ENCODE measurements at regions of chr7 and their contacts with region 1.

Region 1: DNA sequence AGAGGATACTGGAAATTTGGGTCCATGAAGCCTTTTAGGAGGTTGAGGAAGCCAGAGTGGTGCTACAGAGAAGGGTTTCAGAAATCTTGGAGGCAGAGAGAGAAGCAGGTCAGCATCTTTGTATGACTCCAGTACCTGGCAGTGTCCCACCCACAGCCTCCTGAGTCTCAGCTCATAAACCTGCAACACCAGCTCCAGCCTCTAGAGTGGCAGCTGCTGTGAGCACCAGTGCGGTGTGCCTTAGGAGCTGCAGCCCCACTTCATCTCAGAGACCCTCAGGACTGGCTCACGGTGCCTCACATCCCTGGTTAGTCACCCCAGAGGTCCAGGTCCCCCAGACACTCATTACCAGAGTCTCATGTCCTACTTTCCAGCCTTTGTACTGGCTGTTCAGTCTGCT is 84.8 kb upstream of the PRKAR2B start:
- H3K4me3 Mint-ChIP-seq: no peak overlapping the region
- H3K27ac Mint-ChIP-seq: peak overlapping the region; percentile 23
- H3K4me1 Mint-ChIP-seq: peaks cover 24% of the 10 kb centered on the region
- H3K27me3 Mint-ChIP-seq: no peaks in the 10 kb centered on the region

Region 2: DNA sequence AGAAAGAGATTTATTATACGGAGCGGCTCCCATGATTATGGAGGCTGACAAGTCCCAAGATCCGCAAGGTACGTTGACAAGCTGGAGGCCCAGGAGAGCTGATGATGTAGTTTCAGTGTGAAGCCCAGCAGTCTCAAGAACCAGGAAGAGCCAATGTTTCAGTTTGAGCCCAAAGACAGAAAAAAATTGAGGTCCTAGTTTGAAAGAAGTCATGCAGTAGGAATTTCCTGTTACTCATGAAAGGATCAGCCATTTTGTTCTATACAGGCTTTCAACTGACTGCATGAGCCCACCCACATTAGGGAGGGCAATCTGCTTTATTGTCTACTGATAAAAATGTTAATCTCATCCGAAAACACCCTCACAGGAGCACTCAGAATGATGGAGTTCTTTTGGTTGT is 350.3 kb before region 1 on chr7:
- intact Hi-C with region 1: no loop called
- H3K4me3 Mint-ChIP-seq: no peak overlapping the region
- H3K27ac Mint-ChIP-seq: no peak overlapping the region
- H3K4me1 Mint-ChIP-seq: no peaks in the 10 kb centered on the region
- H3K27me3 Mint-ChIP-seq: peaks cover 3% of the 10 kb centered on the region

Region 3: DNA sequence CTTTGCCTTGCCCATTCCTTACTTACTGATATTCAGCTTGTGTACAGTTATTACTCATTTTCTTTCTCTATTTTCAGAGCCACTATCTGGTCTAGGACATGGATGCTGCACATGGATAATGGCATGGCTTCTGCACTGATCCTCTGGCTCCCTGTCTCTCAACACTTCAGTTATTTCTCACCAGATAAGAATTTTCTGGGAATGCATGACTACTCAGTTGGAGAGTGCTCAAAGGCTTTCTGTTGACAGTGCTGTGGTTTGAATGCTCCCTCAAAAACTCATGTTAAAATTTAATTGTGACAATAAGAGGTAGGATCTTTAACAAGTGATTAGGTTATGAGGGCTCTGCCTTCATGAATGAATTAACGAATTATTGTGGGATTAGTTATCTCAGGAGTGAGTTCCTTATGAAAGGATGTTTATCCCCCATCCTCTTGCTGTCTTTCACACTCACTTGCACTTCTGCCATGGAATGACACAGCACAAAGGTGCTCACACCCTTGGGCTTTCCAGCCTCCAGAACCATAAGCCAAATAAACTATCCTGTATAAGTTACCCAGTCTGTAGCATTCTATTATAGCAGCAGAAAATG is 110.8 kb before region 1 on chr7:
- intact Hi-C with region 1: no loop called
- H3K4me3 Mint-ChIP-seq: no peak overlapping the region
- H3K27ac Mint-ChIP-seq: no peak overlapping the region
- H3K4me1 Mint-ChIP-seq: peaks cover 7% of the 10 kb centered on the region
- H3K27me3 Mint-ChIP-seq: peaks cover 4% of the 10 kb centered on the region

Region 4: DNA sequence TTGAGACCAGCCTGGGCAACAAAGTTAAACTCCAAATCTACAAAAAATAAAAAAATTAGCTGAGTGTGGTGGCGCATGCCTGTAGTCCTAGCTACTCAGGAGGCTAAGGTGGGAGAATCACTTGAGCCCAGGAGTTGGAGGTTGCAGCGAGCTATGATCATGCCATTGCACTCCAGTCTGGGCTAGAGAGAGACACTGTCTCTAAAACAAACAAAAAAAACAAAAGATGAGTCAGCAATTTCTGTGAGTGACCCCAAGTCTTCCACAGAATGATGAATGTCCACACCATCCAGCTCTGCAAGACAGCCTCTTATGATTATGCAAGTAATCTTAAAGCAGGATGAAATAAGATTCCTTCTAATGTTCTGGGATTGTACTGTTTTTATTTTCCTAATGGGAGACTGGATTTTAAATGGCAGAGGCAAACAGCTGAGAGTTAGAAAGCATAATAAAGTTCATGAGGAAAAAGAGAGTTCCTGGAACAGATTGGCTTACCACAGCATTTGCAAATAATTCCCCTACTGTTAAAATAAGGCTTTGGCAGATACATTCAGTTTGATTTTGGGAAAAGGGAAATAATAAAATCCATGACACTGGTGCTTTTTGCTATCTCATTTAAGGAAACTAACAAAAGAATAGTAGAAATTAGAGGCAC is 65.8 kb after region 1 on chr7:
- intact Hi-C with region 1: loop called (anchors 5 kb)
- H3K4me3 Mint-ChIP-seq: peak overlapping the region; percentile 7
- H3K27ac Mint-ChIP-seq: peak overlapping the region; percentile 81
- H3K4me1 Mint-ChIP-seq: peaks cover 41% of the 10 kb centered on the region
- H3K27me3 Mint-ChIP-seq: no peaks in the 10 kb centered on the region

Region 5: DNA sequence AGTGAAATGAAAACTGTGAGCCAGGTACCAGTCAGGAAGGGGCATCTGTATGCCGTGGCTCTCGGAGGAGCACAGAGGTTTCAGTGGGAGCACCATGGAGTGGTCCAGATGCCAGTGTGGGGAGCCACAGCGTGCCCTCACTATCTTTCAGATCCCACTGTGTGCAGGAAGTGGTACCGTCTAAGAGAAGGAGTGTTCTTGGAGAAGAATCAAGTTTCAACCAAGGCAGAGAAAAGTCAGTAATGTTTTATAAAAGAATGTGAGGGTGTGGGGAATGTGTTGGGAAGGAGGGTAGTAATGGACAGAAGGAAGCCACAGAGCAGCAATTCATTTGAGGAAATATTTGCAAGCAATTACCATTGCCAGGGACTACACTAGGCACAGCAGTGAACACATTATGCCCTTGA is 120.3 kb after region 1 on chr7:
- intact Hi-C with region 1: no loop called
- H3K4me3 Mint-ChIP-seq: no peak overlapping the region
- H3K27ac Mint-ChIP-seq: peak overlapping the region; percentile 4
- H3K4me1 Mint-ChIP-seq: peaks cover 11% of the 10 kb centered on the region
- H3K27me3 Mint-ChIP-seq: no peaks in the 10 kb centered on the region

Region 6: DNA sequence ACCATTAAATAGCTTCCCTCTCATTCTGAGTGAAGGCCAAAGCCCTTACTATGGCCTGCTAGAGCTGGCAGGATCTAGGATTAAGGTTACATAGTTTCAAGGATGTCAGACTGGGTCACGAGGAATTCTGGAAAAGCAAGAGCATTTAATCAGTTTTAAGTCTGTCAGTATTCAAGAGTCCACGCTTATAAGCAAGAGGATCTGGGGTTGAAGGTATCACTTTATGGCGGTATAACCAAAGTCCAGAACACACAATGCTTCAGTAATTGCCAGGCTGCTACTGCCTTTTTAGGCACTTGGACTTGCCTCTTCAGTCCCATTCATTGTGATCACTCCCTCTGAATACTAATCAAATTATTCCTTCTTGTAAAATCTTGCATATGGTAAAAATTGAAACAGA is 310.0 kb after region 1 on chr7:
- intact Hi-C with region 1: no loop called
- H3K4me3 Mint-ChIP-seq: no peak overlapping the region
- H3K27ac Mint-ChIP-seq: no peak overlapping the region
- H3K4me1 Mint-ChIP-seq: no peaks in the 10 kb centered on the region
- H3K27me3 Mint-ChIP-seq: no peaks in the 10 kb centered on the region